GM12878 (cell line): ENCODE measurements at regions of chr2 and their contacts with region 1.

Region 1: DNA sequence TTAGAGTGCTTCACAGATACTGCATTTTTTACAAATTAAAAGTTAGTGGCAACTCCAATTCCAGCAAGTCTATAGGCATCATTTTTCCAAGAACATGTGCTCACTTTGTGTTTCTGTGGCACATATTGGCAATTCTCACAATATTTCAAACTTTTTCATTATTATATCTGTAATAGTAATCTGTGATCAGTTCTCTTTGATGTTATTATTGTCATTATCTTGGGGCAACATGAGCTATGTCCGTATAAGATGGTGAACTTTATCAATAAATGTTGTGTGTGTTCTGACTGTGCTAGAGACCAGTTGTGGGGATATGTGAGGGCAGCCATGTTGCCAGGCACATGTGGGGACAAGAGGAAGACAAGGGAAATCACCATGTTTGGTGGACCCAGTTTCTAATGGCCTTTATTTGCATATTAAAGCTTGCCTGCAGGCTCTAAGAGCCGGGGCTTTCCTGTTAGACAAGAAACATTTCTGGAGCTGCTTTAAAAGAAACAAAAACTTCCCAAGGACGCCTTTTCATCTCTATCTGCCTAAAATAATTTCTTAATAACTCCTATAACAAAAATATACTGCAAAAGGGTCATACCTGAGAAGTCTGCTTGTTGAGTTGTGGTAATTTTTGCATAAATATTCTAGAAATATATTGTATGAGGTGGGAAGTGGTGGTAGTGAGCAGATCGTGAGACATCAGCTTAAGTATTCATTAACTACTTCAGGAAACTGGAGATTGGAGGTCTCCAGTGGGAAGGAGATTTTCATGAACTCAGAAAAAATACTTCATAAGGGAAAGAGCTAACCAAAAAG is 37.2 kb downstream of the KYNU start:
- DNase-seq: peak; percentile 75
- ATAC-seq: peak; percentile 100
- H3K4me3 ChIP-seq: peak overlapping the region; percentile 37
- H3K27ac ChIP-seq: peak overlapping the region; percentile 85
- H3K4me1 ChIP-seq: peaks cover 13% of the 10 kb centered on the region; the same call in 1 of the 2 replicates
- H3K27me3 ChIP-seq: no peaks in the 10 kb centered on the region
- CTCF ChIP-seq: no peak
- EP300 ChIP-seq: no peak
- POLR2A ChIP-seq: peak; percentile 33; the same call in 1 of the 2 replicates
- RAD21 ChIP-seq: no peak

Region 2: DNA sequence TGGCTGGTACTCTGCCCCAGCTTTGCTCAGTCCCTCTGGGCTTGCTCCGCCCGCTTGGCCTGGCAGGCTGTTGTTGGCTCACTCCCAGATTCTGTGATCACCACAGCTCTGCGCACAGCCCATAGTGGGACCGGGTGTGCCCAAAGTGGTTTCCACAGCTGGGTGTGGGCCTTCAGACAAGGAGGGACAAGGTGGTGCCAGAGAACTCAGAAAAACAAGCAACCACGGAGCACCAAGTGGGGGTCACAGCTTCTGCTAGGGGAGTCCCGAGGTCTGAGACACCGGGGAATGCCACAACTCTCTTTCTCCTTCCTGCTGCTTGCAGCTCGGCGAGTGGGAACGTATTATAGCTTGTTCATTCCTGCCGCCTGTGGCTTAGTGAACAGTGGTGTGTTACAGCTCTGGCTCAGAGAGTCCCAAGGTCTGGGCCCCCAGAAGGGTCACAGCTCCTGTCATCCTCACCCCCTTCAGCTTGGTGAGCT is 46.4 kb before region 1 on chr2:
- CTCF ChIA-PET with region 1: interaction called, 6 read pairs
- POLR2A ChIA-PET with region 1: interaction called, 9 read pairs
- RAD21 ChIA-PET with region 1: interaction called, 23 read pairs
- SMC1A ChIA-PET with region 1: interaction called, 32 read pairs
- in situ Hi-C with region 1: no loop called
- intact Hi-C with region 1: loop called (anchors 1 kb)
- DNase-seq: no peak
- ATAC-seq: peak; percentile 39
- H3K4me3 ChIP-seq: no peak overlapping the region
- H3K27ac ChIP-seq: peak overlapping the region; percentile 56
- H3K4me1 ChIP-seq: peaks cover 19% of the 10 kb centered on the region
- H3K27me3 ChIP-seq: no peaks in the 10 kb centered on the region
- CTCF ChIP-seq: no peak
- EP300 ChIP-seq: 0 out of 4 replicates have a peak, but pooled peaks of 1 of the 2 experiments have one; percentile 6
- POLR2A ChIP-seq: no peak
- RAD21 ChIP-seq: no peak

Region 3: DNA sequence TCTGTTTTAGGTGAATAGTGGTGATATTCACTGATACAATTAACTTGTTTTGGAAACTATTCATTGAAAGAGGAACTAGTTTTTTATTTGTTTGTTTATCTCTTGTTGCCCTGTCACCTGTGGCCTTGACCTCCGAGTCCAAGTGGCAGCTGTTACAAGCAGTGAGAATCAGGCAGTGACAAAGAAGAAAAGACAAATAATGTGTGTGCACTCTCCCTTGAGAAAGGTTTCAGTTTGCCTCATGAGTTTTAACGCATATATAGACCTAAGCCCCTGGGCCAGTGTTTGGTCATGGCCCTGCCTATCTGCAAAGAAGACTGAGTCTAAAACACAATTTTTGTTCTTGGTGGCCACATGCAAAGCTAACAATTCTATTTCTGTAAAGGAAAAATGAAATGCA is 22.0 kb before region 1 on chr2:
- CTCF ChIA-PET with region 1: interaction called, 4 read pairs
- POLR2A ChIA-PET with region 1: interaction called, 7 read pairs
- RAD21 ChIA-PET with region 1: interaction called, 16 read pairs
- SMC1A ChIA-PET with region 1: interaction called, 14 read pairs
- in situ Hi-C with region 1: no loop called
- intact Hi-C with region 1: no loop called
- DNase-seq: peak; percentile 79
- ATAC-seq: peak; percentile 98
- H3K4me3 ChIP-seq: no peak overlapping the region
- H3K27ac ChIP-seq: peak overlapping the region; percentile 48; the same call in 1 of the 2 replicates
- H3K4me1 ChIP-seq: peaks cover 14% of the 10 kb centered on the region; the same call in 1 of the 2 replicates
- H3K27me3 ChIP-seq: no peaks in the 10 kb centered on the region
- CTCF ChIP-seq: no peak
- EP300 ChIP-seq: peak; percentile 55 to 92; a peak in 3 of 4 replicates
- POLR2A ChIP-seq: no peak
- RAD21 ChIP-seq: no peak

Region 4: GRCh38 chr2:142926445-142926844 is 11.7 kb after region 1 on chr2:
- CTCF ChIA-PET with region 1: interaction called, 6 read pairs
- POLR2A ChIA-PET with region 1: interaction called, 6 read pairs
- RAD21 ChIA-PET with region 1: interaction called, 3 read pairs
- SMC1A ChIA-PET with region 1: interaction called, 14 read pairs
- in situ Hi-C with region 1: no loop called
- intact Hi-C with region 1: no loop called
- DNase-seq: no peak
- ATAC-seq: no peak
- H3K4me3 ChIP-seq: no peak overlapping the region
- H3K27ac ChIP-seq: no peak overlapping the region
- H3K4me1 ChIP-seq: no peaks in the 10 kb centered on the region
- H3K27me3 ChIP-seq: no peaks in the 10 kb centered on the region
- CTCF ChIP-seq: no peak
- EP300 ChIP-seq: no peak
- POLR2A ChIP-seq: no peak
- RAD21 ChIP-seq: no peak

Region 5: GRCh38 chr2:142974288-142975024 is 59.7 kb after region 1 on chr2:
- CTCF ChIA-PET with region 1: interaction called, 6 read pairs
- POLR2A ChIA-PET with region 1: no interaction called
- RAD21 ChIA-PET with region 1: interaction called, 10 read pairs
- SMC1A ChIA-PET with region 1: interaction called, 19 read pairs
- in situ Hi-C with region 1: no loop called
- intact Hi-C with region 1: no loop called
- DNase-seq: no peak
- ATAC-seq: peak; percentile 61
- H3K4me3 ChIP-seq: no peak overlapping the region
- H3K27ac ChIP-seq: no peak overlapping the region
- H3K4me1 ChIP-seq: peaks cover 9% of the 10 kb centered on the region
- H3K27me3 ChIP-seq: no peaks in the 10 kb centered on the region
- CTCF ChIP-seq: no peak
- EP300 ChIP-seq: no peak
- POLR2A ChIP-seq: no peak
- RAD21 ChIP-seq: no peak

Region 6: GRCh38 chr2:143015656-143016055 is 100.9 kb after region 1 on chr2:
- CTCF ChIA-PET with region 1: no interaction called
- POLR2A ChIA-PET with region 1: no interaction called
- RAD21 ChIA-PET with region 1: no interaction called
- SMC1A ChIA-PET with region 1: no interaction called
- in situ Hi-C with region 1: no loop called
- intact Hi-C with region 1: no loop called
- DNase-seq: no peak
- ATAC-seq: peak; percentile 21; the same call in 2 of the 3 replicates
- H3K4me3 ChIP-seq: no peak overlapping the region
- H3K27ac ChIP-seq: no peak overlapping the region
- H3K4me1 ChIP-seq: no peaks in the 10 kb centered on the region
- H3K27me3 ChIP-seq: no peaks in the 10 kb centered on the region
- CTCF ChIP-seq: no peak
- EP300 ChIP-seq: no peak
- POLR2A ChIP-seq: no peak
- RAD21 ChIP-seq: no peak